ENCODE measurements at regions of chr1 and their contacts with region 1.

Region 1: GRCh38 chr1:192575499-192576189 is at the start of gene RGS1:
- DNase-seq: peak; percentile 62 to 90
- ATAC-seq: peak; percentile 88 to 91 (median 88)
- H3K4me3 ChIP-seq: peak within 1 kb of the TSS; percentile 21
- H3K4me3 Mint-ChIP-seq: peak within 1 kb of the TSS; percentile 89
- H3K27ac ChIP-seq: peak within 1 kb of the TSS; percentile 81
- H3K27ac Mint-ChIP-seq: peak within 1 kb of the TSS; percentile 91 to 92
- H3K4me1 ChIP-seq: peaks cover 3% of the 10 kb centered on the region
- H3K4me1 Mint-ChIP-seq: peaks cover 25 to 56% of the 10 kb centered on the region in 2 donors
- H3K27me3 ChIP-seq: no peaks in the 10 kb centered on the region
- H3K27me3 Mint-ChIP-seq: no peaks in the 10 kb centered on the region
- CTCF ChIP-seq: no peak
- total RNA-seq, gene RGS1: 306 to 365 (median 343) TPM

Region 2: DNA sequence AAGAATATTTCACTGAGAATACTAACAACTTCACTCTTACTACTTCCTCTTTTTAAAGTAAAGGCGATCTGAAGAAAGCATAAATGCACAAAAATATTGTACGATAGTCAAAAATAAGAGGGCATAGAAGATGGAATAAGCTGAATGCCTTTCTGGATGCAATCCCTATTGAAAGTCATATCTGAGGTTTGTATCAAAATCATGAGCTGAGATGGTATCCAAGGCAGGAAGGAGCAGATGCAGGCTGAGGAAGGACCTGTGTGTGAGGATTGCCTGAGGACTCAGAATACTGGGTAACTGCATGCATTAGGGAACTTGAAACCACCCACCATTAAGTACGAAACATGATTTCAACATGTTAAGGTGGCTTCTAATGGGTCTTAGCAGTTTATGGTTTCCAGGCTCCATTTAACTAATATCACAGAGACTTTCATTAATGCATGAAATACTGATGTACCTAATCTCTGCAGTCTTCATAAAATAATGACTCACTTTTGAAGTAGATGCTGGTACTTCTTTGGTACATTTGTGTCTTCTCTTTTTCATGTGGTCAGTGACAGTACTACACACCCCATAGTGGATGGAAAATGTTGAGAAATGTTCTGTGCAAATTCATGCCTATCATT is 29.6 kb before region 1 on chr1:
- intact Hi-C with region 1: loop called (anchors 2 kb)
- DNase-seq: no peak
- ATAC-seq: peak in 1 of 3 donors; percentile 28
- H3K4me3 ChIP-seq: no peak overlapping the region
- H3K4me3 Mint-ChIP-seq: no peak overlapping the region
- H3K27ac ChIP-seq: no peak overlapping the region
- H3K27ac Mint-ChIP-seq: no peak overlapping the region
- H3K4me1 ChIP-seq: peaks cover 11% of the 10 kb centered on the region
- H3K4me1 Mint-ChIP-seq: peaks cover 41 to 45% of the 10 kb centered on the region in 2 donors
- H3K27me3 ChIP-seq: no peaks in the 10 kb centered on the region
- H3K27me3 Mint-ChIP-seq: no peaks in the 10 kb centered on the region
- CTCF ChIP-seq: no peak

Region 3: GRCh38 chr1:192826791-192827477 is 251.3 kb after region 1 on chr1:
- intact Hi-C with region 1: no loop called
- DNase-seq: no peak
- ATAC-seq: no peak
- H3K4me3 ChIP-seq: no peak overlapping the region
- H3K4me3 Mint-ChIP-seq: no peak overlapping the region
- H3K27ac ChIP-seq: no peak overlapping the region
- H3K27ac Mint-ChIP-seq: no peak overlapping the region
- H3K4me1 ChIP-seq: no peaks in the 10 kb centered on the region
- H3K4me1 Mint-ChIP-seq: no peaks in the 10 kb centered on the region
- H3K27me3 ChIP-seq: peaks cover 3% of the 10 kb centered on the region
- H3K27me3 Mint-ChIP-seq: peaks cover 18 to 37% of the 10 kb centered on the region in 2 donors
- CTCF ChIP-seq: no peak

Region 4: GRCh38 chr1:194535369-194535768 is 1959.7 kb after region 1 on chr1:
- intact Hi-C with region 1: no loop called
- DNase-seq: no peak
- ATAC-seq: no peak
- H3K4me3 ChIP-seq: no peak overlapping the region
- H3K4me3 Mint-ChIP-seq: no peak overlapping the region
- H3K27ac ChIP-seq: no peak overlapping the region
- H3K27ac Mint-ChIP-seq: no peak overlapping the region
- H3K4me1 ChIP-seq: no peaks in the 10 kb centered on the region
- H3K4me1 Mint-ChIP-seq: no peaks in the 10 kb centered on the region
- H3K27me3 ChIP-seq: no peaks in the 10 kb centered on the region
- H3K27me3 Mint-ChIP-seq: no peaks in the 10 kb centered on the region
- CTCF ChIP-seq: no peak

Measured in natural killer cell (primary cell).